Thyroid gland (tissue), 4 donors: ENCODE measurements at regions of chr19 and their contacts with region 1.

Region 1: DNA sequence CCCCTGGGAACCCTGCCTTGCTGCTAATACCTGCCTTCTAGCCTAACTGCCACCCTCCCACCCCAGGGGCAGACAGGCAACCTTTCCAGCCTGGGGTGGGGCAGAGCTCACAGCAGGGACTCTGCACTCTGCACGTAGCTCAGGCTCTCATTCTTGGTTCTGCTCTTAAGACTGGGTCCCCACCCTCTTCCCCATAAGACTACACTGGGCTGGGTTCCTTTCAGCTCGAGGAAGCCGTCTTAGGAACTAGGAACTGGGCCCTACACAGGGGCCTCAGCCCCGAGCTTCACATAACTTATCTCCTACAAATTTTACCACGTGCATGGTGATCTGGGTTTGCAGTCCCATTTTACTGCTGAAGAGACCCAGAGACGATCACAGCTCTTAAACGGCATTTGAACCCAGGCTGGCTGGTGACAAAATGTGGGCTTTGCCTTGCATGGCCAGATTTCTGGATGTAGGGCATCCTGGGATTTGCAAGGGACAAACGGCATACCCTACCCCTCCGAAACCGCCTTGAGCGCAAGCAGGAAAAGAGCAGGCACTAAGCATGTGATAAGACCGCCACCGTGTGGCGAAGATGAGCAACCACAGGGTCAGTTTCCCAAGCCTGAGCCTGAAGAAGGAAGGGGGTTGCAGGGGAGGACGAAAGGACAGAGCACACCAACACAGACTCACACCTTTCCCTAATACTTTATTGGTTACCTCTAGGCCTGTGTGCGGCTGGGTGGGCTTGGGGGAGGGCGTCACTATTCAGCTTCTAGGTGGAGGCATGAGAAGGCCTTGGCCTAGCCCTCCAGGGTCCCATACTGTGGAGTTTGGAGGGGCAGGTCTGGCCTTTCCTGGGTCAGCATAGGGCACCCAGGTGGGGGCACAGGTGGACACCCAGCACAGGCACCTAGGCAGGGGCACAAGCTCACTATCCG is 5.1 kb downstream of the JUNB start:
- DNase-seq: peak; percentile 70 to 76
- H3K4me3 ChIP-seq: no peak overlapping the region
- H3K27ac ChIP-seq: peak overlapping the region in 1 of 3 donors; percentile 26
- H3K4me1 ChIP-seq: peaks cover 11 to 31% of the 10 kb centered on the region in 2 donors
- H3K27me3 ChIP-seq: no peaks in the 10 kb centered on the region
- CTCF ChIP-seq: peak; percentile 70 to 99 (median 96)
- POLR2A ChIP-seq: no peak

Region 2: DNA sequence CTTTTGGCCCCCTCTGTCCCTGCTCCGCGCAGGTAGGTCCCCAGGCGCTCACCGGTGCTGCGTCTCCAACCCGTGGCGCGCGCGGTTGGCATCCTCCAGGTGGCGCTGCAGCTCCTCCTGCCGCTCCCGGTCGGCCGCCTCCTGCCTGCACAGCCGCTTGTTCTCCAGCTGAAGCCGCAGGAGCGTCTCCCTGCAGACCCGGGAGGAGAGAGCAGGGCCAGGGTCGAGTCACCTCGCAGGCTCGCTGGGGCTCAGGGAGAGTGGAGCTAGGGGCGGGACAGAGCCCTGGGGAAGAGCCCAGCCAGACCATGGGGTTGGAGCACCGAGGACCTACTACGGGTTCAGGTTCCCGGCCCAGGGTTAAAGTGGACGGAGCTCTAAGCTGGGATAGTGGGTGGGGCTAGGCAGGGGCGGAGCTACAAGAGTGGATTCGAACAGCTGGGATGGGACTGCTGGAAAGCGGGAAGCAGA is 30.3 kb before region 1 on chr19:
- intact Hi-C with region 1: loop called (anchors 5 kb)
- DNase-seq: peak; percentile 57 to 62
- H3K4me3 ChIP-seq: no peak overlapping the region
- H3K27ac ChIP-seq: peak overlapping the region in 1 of 3 donors; percentile 43
- H3K4me1 ChIP-seq: no peaks in the 10 kb centered on the region
- H3K27me3 ChIP-seq: no peaks in the 10 kb centered on the region
- CTCF ChIP-seq: peak in 4 of 6 experiments; percentile 35 to 62 (median 54)
- POLR2A ChIP-seq: no peak

Region 3: DNA sequence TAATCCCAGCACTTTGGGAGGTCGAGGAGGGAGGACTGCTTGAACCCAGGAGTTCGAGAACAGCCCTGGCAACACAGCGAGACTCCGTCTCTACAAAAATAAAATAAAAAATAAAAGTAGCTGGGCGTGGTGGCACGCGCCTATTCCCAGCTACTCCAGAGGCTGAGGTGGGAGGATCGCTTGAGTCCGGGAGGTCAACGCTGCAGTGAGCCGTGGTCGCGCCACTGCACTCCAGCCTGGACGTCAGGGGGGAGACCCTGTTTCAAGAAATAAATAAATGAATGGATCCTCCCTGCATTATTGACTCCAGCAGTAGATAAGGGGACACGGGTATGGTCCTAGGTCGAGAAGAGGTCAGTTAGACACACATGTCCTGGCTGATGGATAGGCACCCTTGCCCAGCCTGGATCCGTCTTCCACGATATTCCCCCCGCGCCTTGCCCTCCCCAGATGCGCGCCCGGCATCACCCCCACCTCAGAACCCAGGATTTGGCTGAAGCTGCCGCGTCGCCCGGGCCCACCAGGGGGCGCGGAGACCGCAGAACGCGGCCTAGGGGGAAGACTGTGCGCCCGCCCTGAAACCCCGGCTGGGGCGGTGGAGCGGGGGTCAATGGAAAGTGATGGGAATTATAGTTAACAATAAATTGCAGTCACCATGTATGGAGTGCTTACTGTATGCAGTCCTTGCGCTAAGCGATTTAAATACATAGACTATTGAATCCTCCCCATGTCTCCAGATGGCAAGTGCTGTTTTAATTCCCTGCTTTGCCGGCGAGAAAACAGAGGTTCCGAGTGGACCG is 19.0 kb before region 1 on chr19:
- intact Hi-C with region 1: loop called (anchors 2 kb)
- DNase-seq: peak; percentile 76 to 80
- H3K4me3 ChIP-seq: peak overlapping the region; percentile 25 to 69 (median 65)
- H3K27ac ChIP-seq: peak overlapping the region; percentile 92 to 98 (median 98)
- H3K4me1 ChIP-seq: peaks cover 23 to 36% of the 10 kb centered on the region in 2 donors
- H3K27me3 ChIP-seq: no peaks in the 10 kb centered on the region
- CTCF ChIP-seq: peak; percentile 78 to 97 (median 92)
- POLR2A ChIP-seq: peak in 1 of 2 donors; percentile 5